Activated CD8-positive, alpha-beta T cell treated with anti-CD3 and anti-CD28 coated beads, Interleukin-2, amount 10 ng/mL, durations not matched to agents 7 days and 5 days (primary cell): ENCODE measurements at regions of chr15 and their contacts with region 1.

Region 1: DNA sequence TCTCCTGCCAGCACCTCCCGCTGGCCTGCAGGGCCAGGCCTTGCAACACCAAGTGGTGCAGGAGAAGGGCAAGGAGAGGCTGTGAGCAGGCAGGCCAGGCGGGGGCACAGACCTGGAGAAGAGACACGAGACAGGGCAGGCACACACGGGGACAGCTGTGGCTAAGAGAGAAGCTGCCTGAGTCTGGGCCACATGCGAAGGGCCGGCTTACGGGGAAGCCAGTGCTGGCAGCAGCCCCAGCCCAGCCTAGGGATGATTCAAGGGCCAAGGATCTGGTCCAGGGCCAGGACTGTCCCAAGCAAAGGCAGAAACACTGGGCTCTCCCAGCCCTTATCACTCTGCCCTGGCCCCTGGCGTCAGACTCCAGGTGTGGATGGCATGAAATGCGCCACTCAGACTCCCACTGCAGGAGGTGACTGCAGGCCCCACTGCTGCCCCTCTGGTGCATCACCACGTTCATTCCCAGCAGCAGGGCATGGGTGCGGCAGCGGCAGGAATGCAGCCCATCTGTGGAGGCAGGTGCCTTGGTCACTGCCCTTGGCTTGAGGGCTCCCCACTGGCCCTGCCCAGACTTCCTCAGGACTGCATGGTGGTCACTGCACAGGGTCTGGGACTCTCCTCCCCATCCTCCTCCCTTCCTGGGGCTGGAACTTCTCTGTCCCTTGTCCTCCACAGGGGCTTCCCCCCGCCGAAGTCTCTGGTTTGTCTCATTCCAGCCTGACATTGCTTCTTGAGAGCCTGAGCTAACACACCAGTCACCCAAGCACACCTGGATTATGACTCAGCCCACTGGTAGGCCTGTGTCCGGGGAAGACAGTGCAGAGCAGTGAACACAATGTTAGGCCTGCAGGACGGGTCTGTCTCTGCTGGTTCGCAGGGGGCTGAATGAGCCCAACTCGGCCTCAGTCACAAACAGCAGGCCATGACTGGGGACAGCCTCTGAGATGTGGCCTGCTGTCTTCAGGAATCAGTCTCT is 69.3 kb downstream of the TBC1D2B start:
- DNase-seq: no peak
- ATAC-seq: no peak
- H3K4me3 Mint-ChIP-seq: no peak overlapping the region
- H3K27ac Mint-ChIP-seq: peak overlapping the region; percentile 46
- H3K4me1 Mint-ChIP-seq: peaks cover 31% of the 10 kb centered on the region
- H3K27me3 Mint-ChIP-seq: no peaks in the 10 kb centered on the region

Region 2: GRCh38 chr15:77966540-77967290 is 41.5 kb before region 1 on chr15:
- CTCF ChIA-PET with region 1: interaction called, 10 read pairs
- POLR2A ChIA-PET with region 1: no interaction called
- DNase-seq: peak; percentile 66
- ATAC-seq: peak; percentile 49
- H3K4me3 Mint-ChIP-seq: no peak overlapping the region
- H3K27ac Mint-ChIP-seq: no peak overlapping the region
- H3K4me1 Mint-ChIP-seq: peaks cover 17% of the 10 kb centered on the region
- H3K27me3 Mint-ChIP-seq: peaks cover 28% of the 10 kb centered on the region

Region 3: DNA sequence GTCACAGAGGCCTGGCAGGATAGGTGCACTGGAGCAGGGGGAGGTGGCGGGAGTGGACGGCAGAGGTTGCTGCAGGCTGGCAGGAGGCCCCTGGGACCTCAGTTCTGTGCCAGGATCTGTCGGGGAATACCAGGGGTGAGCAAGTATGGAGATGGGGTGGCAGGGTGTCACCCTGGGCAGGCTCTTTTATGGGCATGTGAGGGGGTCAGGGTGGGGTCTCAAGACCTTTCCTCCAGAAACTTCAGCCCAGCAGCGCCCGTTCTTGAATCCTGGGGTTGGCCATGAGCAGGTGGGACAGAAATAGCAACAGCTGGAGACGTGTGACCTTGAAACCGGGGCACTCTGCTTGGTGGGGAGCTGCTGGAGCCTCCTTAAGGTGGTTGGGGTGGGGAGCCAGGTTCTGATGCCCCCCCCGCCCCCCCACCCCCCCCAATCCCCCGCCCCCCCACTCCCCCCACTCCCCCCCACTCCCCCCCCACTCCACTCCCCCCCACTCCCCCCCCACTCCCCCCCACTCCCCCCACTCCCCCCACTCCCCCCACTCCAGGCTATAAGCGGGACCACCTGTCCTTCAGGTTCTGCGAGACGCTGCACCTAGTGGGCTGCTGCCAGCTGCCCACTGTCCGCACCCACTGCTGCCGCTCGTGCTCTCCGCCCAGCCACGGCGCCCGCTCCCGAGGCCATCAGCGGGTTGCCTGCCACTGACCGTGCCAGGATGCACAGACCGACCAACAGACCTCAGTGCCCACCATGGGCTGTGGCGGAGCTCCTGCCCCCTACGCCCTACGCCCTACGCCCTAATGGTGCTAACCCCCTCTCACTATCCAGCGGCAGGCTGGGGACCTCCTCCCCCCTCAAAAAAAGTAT is 15.6 kb before region 1 on chr15:
- CTCF ChIA-PET with region 1: no interaction called
- POLR2A ChIA-PET with region 1: no interaction called
- DNase-seq: no peak
- ATAC-seq: no peak
- H3K4me3 Mint-ChIP-seq: no peak overlapping the region
- H3K27ac Mint-ChIP-seq: peak overlapping the region; percentile 46
- H3K4me1 Mint-ChIP-seq: peaks cover 37% of the 10 kb centered on the region
- H3K27me3 Mint-ChIP-seq: no peaks in the 10 kb centered on the region

Region 4: GRCh38 chr15:78024883-78025282 is 16.7 kb after region 1 on chr15:
- CTCF ChIA-PET with region 1: no interaction called
- POLR2A ChIA-PET with region 1: no interaction called
- DNase-seq: no peak
- ATAC-seq: no peak
- H3K4me3 Mint-ChIP-seq: no peak overlapping the region
- H3K27ac Mint-ChIP-seq: peak overlapping the region; percentile 69
- H3K4me1 Mint-ChIP-seq: peaks cover 10% of the 10 kb centered on the region
- H3K27me3 Mint-ChIP-seq: no peaks in the 10 kb centered on the region